CD4-positive, alpha-beta T cell (primary cell): ENCODE measurements at regions of chr10 and their contacts with region 1.

Region 1: DNA sequence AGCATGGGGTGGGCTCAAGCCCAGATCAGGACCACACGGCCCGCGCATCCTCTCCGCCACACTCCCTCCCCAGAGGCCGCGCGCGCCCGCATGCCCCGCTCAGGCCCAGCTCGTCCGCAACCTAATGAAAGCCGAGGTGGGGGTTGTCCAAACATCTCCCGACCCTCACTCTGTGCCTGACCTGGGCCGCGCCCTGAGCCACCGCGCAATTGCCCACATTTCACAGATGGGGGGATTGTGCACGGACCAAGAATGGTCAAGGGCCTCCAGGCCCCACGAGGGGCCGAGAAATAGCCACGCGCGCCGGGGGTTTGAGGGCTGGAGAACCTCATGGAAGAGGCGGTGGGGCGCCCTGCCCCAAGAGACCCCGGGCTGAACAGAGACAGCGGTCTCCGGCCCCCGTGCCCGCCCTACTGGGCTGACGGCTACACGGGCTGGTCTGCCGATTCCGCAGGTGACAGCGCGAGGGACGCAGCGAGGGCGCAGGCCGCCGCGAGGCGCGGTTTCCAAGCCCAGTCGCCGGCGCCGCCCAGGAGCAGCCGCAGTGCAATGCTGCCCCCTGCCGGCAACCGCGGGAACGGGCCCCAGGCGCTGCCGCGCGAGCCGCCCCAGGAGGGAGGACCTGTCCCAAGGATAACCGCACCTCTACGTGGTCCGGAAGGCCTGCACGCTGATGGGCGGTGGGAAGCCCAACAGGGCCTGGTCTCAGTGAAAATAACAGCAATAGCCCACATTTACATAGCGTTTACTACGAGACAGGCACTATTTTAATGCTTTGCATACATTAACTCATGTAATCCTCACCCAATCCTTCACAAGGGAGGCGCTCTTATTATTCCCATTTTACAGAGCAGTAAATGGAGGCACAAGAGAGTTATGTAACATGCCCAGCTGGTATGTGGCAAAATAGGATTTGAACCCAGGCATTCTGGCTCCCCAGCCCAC is 10.5 kb upstream of the GRID1 start:
- DNase-seq: peak; percentile 49 to 89 (median 78)
- ATAC-seq: peak; percentile 97
- H3K4me3 ChIP-seq: peak overlapping the region; percentile 26
- H3K4me3 Mint-ChIP-seq: no peak overlapping the region
- H3K27ac ChIP-seq: no peak overlapping the region
- H3K27ac Mint-ChIP-seq: no peak overlapping the region
- H3K4me1 ChIP-seq: peaks cover 12% of the 10 kb centered on the region
- H3K4me1 Mint-ChIP-seq: no peaks in the 10 kb centered on the region
- H3K27me3 ChIP-seq: peaks cover 20 to 47% of the 10 kb centered on the region in 2 experiments
- H3K27me3 Mint-ChIP-seq: peaks cover 66% of the 10 kb centered on the region
- CTCF ChIP-seq: peak; percentile 96

Region 2: GRCh38 chr10:84537447-84537931 is 1839.6 kb before region 1 on chr10:
- CTCF ChIA-PET with region 1: interaction called, 6 read pairs
- POLR2A ChIA-PET with region 1: no interaction called
- intact Hi-C with region 1: loop called (anchors 1 kb)
- DNase-seq: peak in 6 of 14 experiments; percentile 11 to 80 (median 52)
- ATAC-seq: peak; percentile 67
- H3K4me3 ChIP-seq: no peak overlapping the region
- H3K4me3 Mint-ChIP-seq: no peak overlapping the region
- H3K27ac ChIP-seq: no peak overlapping the region
- H3K27ac Mint-ChIP-seq: no peak overlapping the region
- H3K4me1 ChIP-seq: peaks cover 14% of the 10 kb centered on the region
- H3K4me1 Mint-ChIP-seq: peaks cover 11% of the 10 kb centered on the region
- H3K27me3 ChIP-seq: peaks cover 11 to 18% of the 10 kb centered on the region in 2 experiments
- H3K27me3 Mint-ChIP-seq: peaks cover 39% of the 10 kb centered on the region
- CTCF ChIP-seq: peak; percentile 96

Region 3: GRCh38 chr10:84845624-84846261 is 1531.4 kb before region 1 on chr10:
- CTCF ChIA-PET with region 1: no interaction called
- POLR2A ChIA-PET with region 1: no interaction called
- intact Hi-C with region 1: loop called in 1 of 2 experiments (anchors 5 kb)
- DNase-seq: peak in 2 of 14 experiments; percentile 2 to 6
- ATAC-seq: no peak
- H3K4me3 ChIP-seq: no peak overlapping the region
- H3K4me3 Mint-ChIP-seq: no peak overlapping the region
- H3K27ac ChIP-seq: no peak overlapping the region
- H3K27ac Mint-ChIP-seq: no peak overlapping the region
- H3K4me1 ChIP-seq: no peaks in the 10 kb centered on the region
- H3K4me1 Mint-ChIP-seq: no peaks in the 10 kb centered on the region
- H3K27me3 ChIP-seq: no peaks in the 10 kb centered on the region
- H3K27me3 Mint-ChIP-seq: no peaks in the 10 kb centered on the region
- CTCF ChIP-seq: no peak

Region 4: DNA sequence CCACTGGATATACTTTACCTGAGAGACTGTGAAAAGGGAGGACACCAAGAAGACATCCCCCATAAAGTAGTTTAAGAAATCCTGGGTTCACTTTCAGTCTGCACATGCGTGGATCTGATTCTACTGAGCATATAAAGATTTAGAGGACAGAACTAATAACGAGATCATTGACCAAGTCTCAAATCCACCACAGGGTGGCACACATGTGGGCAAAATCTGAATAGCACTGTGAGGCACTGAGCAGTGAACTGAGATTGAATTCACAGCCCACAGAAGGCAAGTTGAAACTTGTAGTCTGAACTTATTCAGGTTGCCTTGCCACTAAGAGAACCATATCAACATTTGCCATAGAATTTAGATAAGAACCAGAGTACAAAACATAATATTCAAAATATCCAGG is 829.1 kb before region 1 on chr10:
- CTCF ChIA-PET with region 1: no interaction called
- POLR2A ChIA-PET with region 1: no interaction called
- intact Hi-C with region 1: loop called (anchors 1 to 2 kb)
- DNase-seq: peak in 10 of 14 experiments; percentile 3 to 60 (median 17)
- ATAC-seq: peak; percentile 51
- H3K4me3 ChIP-seq: no peak overlapping the region
- H3K4me3 Mint-ChIP-seq: no peak overlapping the region
- H3K27ac ChIP-seq: no peak overlapping the region
- H3K27ac Mint-ChIP-seq: no peak overlapping the region
- H3K4me1 ChIP-seq: no peaks in the 10 kb centered on the region
- H3K4me1 Mint-ChIP-seq: no peaks in the 10 kb centered on the region
- H3K27me3 ChIP-seq: peaks cover 0 to 5% of the 10 kb centered on the region in 2 experiments
- H3K27me3 Mint-ChIP-seq: peaks cover 34% of the 10 kb centered on the region
- CTCF ChIP-seq: peak; percentile 64

Region 5: GRCh38 chr10:85826377-85826776 is 550.7 kb before region 1 on chr10:
- CTCF ChIA-PET with region 1: no interaction called
- POLR2A ChIA-PET with region 1: no interaction called
- intact Hi-C with region 1: no loop called
- DNase-seq: no peak
- ATAC-seq: no peak
- H3K4me3 ChIP-seq: no peak overlapping the region
- H3K4me3 Mint-ChIP-seq: no peak overlapping the region
- H3K27ac ChIP-seq: no peak overlapping the region
- H3K27ac Mint-ChIP-seq: no peak overlapping the region
- H3K4me1 ChIP-seq: no peaks in the 10 kb centered on the region
- H3K4me1 Mint-ChIP-seq: no peaks in the 10 kb centered on the region
- H3K27me3 ChIP-seq: no peaks in the 10 kb centered on the region
- H3K27me3 Mint-ChIP-seq: peaks cover 29% of the 10 kb centered on the region
- CTCF ChIP-seq: no peak

Region 6: DNA sequence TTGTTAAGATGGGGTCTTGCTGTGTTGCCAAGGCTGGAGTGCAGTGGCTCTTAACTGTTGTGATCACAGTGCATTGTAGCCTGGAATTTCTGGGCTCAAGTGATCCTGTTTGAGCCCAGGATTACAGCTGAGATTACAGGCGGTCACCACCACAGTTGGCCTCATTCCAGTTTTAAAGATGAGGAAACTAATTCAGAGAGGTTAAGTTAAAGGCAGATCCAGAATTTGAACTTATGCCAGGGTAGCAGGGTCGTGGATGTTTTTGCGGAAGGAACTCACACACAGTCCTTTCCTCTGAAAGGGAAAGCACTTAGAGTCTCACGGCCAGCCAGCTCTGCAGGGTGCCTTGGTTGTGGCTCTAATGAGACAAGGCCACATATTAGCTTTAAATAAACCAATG is 495.6 kb after region 1 on chr10:
- CTCF ChIA-PET with region 1: no interaction called
- POLR2A ChIA-PET with region 1: no interaction called
- intact Hi-C with region 1: no loop called
- DNase-seq: peak in 3 of 14 experiments; percentile 1 to 14 (median 3)
- ATAC-seq: no peak
- H3K4me3 ChIP-seq: no peak overlapping the region
- H3K4me3 Mint-ChIP-seq: no peak overlapping the region
- H3K27ac ChIP-seq: no peak overlapping the region
- H3K27ac Mint-ChIP-seq: no peak overlapping the region
- H3K4me1 ChIP-seq: no peaks in the 10 kb centered on the region
- H3K4me1 Mint-ChIP-seq: no peaks in the 10 kb centered on the region
- H3K27me3 ChIP-seq: no peaks in the 10 kb centered on the region
- H3K27me3 Mint-ChIP-seq: no peaks in the 10 kb centered on the region
- CTCF ChIP-seq: no peak